A673 (cell line): ENCODE measurements at regions of chr2 and their contacts with region 1.

Region 1: GRCh38 chr2:38750891-38751595 is at the start of gene SRSF7:
- DNase-seq: peak; percentile 100
- H3K4me3 ChIP-seq: peak within 1 kb of the TSS; percentile 90
- H3K27ac ChIP-seq: peak within 1 kb of the TSS; percentile 99
- H3K4me1 ChIP-seq: peaks cover 51% of the 10 kb centered on the region
- H3K27me3 ChIP-seq: no peaks in the 10 kb centered on the region
- CTCF ChIP-seq: no peak
- total RNA-seq, gene SRSF7: 320 and 355 TPM in 2 replicates

Region 2: GRCh38 chr2:38528008-38528442 is 223.0 kb before region 1 on chr2:
- CTCF ChIA-PET with region 1: no interaction called
- POLR2A ChIA-PET with region 1: interaction called, 11 read pairs
- intact Hi-C with region 1: no loop called
- DNase-seq: peak; percentile 83
- H3K4me3 ChIP-seq: peak overlapping the region; percentile 37
- H3K27ac ChIP-seq: no peak overlapping the region
- H3K4me1 ChIP-seq: peaks cover 3% of the 10 kb centered on the region
- H3K27me3 ChIP-seq: no peaks in the 10 kb centered on the region
- CTCF ChIP-seq: peak; percentile 25; the same call in 1 of the 2 replicates

Region 3: GRCh38 chr2:38771632-38772031 is 20.6 kb after region 1 on chr2:
- CTCF ChIA-PET with region 1: no interaction called
- POLR2A ChIA-PET with region 1: interaction called, 11 read pairs
- intact Hi-C with region 1: no loop called
- DNase-seq: peak; percentile 10
- H3K4me3 ChIP-seq: no peak overlapping the region
- H3K27ac ChIP-seq: no peak overlapping the region
- H3K4me1 ChIP-seq: peaks cover 18% of the 10 kb centered on the region
- H3K27me3 ChIP-seq: no peaks in the 10 kb centered on the region
- CTCF ChIP-seq: no peak

Region 4: DNA sequence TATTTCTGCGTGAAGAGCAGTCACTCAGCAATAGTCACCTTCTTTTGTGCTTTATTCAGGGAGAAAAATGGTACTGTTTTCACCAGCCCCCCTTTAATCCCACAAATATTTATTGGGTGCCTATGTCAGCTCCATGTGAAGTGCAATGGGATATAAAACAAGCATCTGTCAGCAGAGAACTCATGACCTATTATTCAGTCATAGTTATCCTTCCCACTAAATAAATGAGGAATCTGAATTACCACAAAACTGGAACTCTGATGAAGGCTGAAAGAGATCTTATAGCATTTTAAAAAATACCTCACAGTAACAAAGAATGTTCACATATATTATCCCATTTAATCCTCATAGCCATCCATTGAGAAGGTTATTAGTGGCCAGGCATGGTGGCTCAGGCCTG is 78.9 kb after region 1 on chr2:
- CTCF ChIA-PET with region 1: no interaction called
- POLR2A ChIA-PET with region 1: interaction called, 3 read pairs
- intact Hi-C with region 1: loop called (anchors 5 kb)
- DNase-seq: no peak
- H3K4me3 ChIP-seq: no peak overlapping the region
- H3K27ac ChIP-seq: no peak overlapping the region
- H3K4me1 ChIP-seq: peaks cover 10% of the 10 kb centered on the region
- H3K27me3 ChIP-seq: no peaks in the 10 kb centered on the region
- CTCF ChIP-seq: no peak